ENCODE measurements at regions of chr18 and their contacts with region 1.

Region 1: GRCh38 chr18:58043491-58044379 is at the start of gene NEDD4L:
- DNase-seq: peak; percentile 66
- H3K4me3 Mint-ChIP-seq: peak within 1 kb of the TSS; percentile 91
- H3K27ac Mint-ChIP-seq: peak within 1 kb of the TSS; percentile 69
- H3K4me1 Mint-ChIP-seq: peaks cover 29% of the 10 kb centered on the region
- H3K27me3 Mint-ChIP-seq: peaks cover 51% of the 10 kb centered on the region
- total RNA-seq, gene NEDD4L: 3.4 and 3.8 TPM in 2 replicates

Region 2: DNA sequence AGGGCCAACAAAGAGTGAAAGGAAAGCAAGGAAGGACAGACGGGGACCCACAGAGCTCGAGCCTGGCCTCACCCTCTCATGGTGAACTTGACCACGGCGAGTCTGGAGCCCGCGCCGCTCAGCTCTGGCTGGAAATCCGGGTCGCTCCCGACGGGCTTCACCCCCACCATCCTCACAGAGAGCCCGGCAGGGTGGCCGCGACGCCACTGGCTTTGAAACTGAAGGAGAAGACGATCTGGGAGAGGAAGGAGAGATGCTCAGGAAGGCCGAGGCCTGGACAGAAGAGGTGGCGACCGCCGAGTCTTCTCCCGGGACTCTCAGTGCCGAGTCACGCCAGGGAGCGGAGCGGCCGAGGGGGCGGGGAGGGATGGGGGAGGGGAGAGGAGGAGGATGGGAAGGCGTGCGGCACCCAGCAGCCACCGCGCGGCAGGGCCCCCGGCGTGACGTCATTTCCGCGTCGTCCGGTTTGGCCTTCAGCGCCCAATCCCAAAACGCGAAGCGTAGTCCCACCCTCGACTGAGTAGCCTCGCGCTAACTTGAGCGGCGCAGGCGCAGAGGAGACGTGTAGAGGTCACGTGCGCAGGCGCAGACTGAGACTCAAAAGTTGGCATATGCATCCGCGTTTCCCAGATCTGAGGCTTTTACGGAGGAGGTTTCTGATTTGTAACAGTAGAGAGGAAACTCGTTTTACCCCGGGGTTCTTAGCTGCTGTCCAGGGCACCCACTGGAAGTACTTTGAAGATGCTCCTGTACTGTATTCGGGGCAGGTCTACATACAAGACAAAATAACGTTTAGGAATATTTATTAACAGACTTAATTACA is 1405.3 kb before region 1 on chr18 and contains the start of gene TXNL1:
- intact Hi-C with region 1: loop called (anchors 5 kb)
- DNase-seq: peak; percentile 98
- H3K4me3 Mint-ChIP-seq: peak within 1 kb of the TSS; percentile 99
- H3K27ac Mint-ChIP-seq: peak within 1 kb of the TSS; percentile 97
- H3K4me1 Mint-ChIP-seq: peaks cover 55% of the 10 kb centered on the region
- H3K27me3 Mint-ChIP-seq: no peaks in the 10 kb centered on the region
- total RNA-seq, gene TXNL1: 94.2 and 100 TPM in 2 replicates

Region 3: GRCh38 chr18:57630002-57630753 is 413.6 kb before region 1 on chr18:
- intact Hi-C with region 1: loop called (anchors 1 kb)
- DNase-seq: peak; percentile 89
- H3K4me3 Mint-ChIP-seq: peak overlapping the region; percentile 96
- H3K27ac Mint-ChIP-seq: peak overlapping the region; percentile 94
- H3K4me1 Mint-ChIP-seq: peaks cover 9% of the 10 kb centered on the region
- H3K27me3 Mint-ChIP-seq: no peaks in the 10 kb centered on the region

Region 4: GRCh38 chr18:57998461-57998860 is 45.3 kb before region 1 on chr18:
- intact Hi-C with region 1: no loop called
- DNase-seq: no peak
- H3K4me3 Mint-ChIP-seq: no peak overlapping the region
- H3K27ac Mint-ChIP-seq: no peak overlapping the region
- H3K4me1 Mint-ChIP-seq: no peaks in the 10 kb centered on the region
- H3K27me3 Mint-ChIP-seq: peaks cover 6% of the 10 kb centered on the region

Region 5: DNA sequence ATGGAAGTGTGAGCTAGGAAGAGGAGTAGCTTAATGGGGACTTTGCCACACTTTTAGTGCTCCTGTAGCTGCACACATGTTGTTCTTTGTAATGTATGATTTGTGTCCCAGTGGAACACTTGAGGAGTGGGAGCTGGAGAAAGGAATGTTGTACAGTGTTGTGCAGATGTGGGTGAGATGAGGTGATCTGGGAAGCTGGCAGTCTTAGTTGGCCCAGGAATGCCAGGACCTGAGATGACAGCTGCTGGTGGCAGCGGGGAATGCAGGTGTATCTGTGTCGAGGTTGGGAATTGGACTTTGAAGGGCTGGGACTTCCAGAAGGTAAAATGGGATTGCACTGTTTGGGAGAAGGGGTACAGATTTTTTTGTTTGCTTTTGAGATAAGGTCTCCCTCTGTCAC is 23.9 kb after region 1 on chr18:
- intact Hi-C with region 1: no loop called
- DNase-seq: no peak
- H3K4me3 Mint-ChIP-seq: no peak overlapping the region
- H3K27ac Mint-ChIP-seq: no peak overlapping the region
- H3K4me1 Mint-ChIP-seq: no peaks in the 10 kb centered on the region
- H3K27me3 Mint-ChIP-seq: peaks cover 11% of the 10 kb centered on the region

Region 6: GRCh38 chr18:58117786-58118403 is 74.2 kb after region 1 on chr18:
- intact Hi-C with region 1: loop called (anchors 1 kb)
- DNase-seq: no peak
- H3K4me3 Mint-ChIP-seq: no peak overlapping the region
- H3K27ac Mint-ChIP-seq: no peak overlapping the region
- H3K4me1 Mint-ChIP-seq: peaks cover 10% of the 10 kb centered on the region
- H3K27me3 Mint-ChIP-seq: peaks cover 5% of the 10 kb centered on the region

Region 7: DNA sequence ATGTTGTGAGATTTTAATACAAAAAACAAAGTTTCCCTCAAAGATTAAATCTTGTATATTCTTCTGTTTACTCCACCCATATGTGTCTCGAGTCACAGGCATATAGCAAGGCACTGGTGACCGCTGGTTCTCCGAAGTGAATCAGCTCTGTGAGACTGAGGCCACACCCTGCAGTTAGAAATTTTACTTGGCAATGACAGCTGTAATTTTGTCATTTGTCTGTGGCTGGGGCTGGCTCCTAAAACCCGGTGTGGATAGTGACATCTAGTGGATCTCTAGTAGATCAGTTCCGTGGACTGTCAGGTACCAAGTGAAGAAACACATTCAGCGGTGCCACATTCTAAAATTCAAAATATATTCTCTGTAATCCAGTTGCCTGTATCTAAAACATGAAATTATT is 278.3 kb after region 1 on chr18:
- intact Hi-C with region 1: loop called (anchors 5 kb)
- DNase-seq: peak; percentile 43
- H3K4me3 Mint-ChIP-seq: no peak overlapping the region
- H3K27ac Mint-ChIP-seq: no peak overlapping the region
- H3K4me1 Mint-ChIP-seq: peaks cover 10% of the 10 kb centered on the region
- H3K27me3 Mint-ChIP-seq: peaks cover 12% of the 10 kb centered on the region

Region 8: DNA sequence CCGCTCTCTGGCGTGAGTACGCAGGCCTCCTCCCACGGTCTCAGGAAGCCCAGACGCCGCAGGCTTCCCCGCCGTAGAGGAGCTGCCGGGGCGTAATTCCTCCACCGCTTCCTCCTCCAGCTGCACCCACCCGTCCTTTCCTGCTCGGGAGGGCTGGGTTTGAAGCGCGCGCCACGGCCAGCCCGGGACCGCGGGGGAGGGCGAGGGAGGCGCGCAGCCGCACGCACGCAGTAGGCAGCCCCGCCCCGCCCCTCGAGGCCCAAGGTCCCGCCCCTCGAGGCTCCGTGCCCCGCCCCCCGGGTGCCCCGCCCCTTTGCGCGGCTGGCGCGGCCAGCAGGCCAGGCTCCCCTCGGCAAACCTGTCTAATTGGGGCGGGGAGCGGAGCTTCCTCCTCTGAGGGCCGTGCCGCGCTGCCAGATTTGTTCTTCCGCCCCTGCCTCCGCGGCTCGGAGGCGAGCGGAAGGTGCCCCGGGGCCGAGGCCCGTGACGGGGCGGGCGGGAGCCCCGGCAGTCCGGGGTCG is 627.4 kb after region 1 on chr18 and contains the start of gene MALT1:
- intact Hi-C with region 1: loop called (anchors 10 kb)
- DNase-seq: peak; percentile 93
- H3K4me3 Mint-ChIP-seq: peak within 1 kb of the TSS; percentile 91
- H3K27ac Mint-ChIP-seq: peak within 1 kb of the TSS; percentile 90
- H3K4me1 Mint-ChIP-seq: peaks cover 66% of the 10 kb centered on the region
- H3K27me3 Mint-ChIP-seq: no peaks in the 10 kb centered on the region
- total RNA-seq, gene MALT1: 32.4 and 34.1 TPM in 2 replicates